ENCODE measurements at regions of chr5 and their contacts with region 1.

Region 1: GRCh38 chr5:54703133-54703532 is 185.6 kb downstream of the SNX18 start:
- DNase-seq: no peak
- ATAC-seq: no peak
- H3K4me3 ChIP-seq: no peak overlapping the region
- H3K4me3 Mint-ChIP-seq: no peak overlapping the region
- H3K27ac ChIP-seq: no peak overlapping the region
- H3K27ac Mint-ChIP-seq: no peak overlapping the region
- H3K4me1 ChIP-seq: peaks cover 10 to 23% of the 10 kb centered on the region in 2 donors
- H3K4me1 Mint-ChIP-seq: peaks cover 25% of the 10 kb centered on the region
- H3K27me3 ChIP-seq: no peaks in the 10 kb centered on the region
- H3K27me3 Mint-ChIP-seq: no peaks in the 10 kb centered on the region
- CTCF ChIP-seq: no peak

Region 2: DNA sequence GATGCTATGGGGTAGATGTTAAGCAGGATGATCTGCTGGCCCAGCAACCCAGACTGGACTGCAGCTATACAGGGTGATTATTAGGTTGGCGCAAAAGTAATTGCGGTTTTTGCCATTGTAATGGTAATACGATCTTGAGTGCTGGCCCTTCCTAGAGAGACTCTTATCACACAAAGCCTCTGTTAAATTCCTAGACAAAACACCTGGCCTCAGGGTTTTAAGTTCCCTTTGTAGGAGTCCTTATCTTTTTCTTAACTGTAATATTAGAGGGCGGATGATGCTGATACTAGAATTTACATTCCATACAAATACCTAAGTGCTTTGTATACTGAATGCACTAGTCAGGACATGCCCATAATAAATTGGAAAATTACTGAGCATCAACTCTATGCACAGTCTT is 920.5 kb before region 1 on chr5:
- CTCF ChIA-PET with region 1: no interaction called
- POLR2A ChIA-PET with region 1: no interaction called
- intact Hi-C with region 1: no loop called
- DNase-seq: no peak
- ATAC-seq: no peak
- H3K4me3 ChIP-seq: no peak overlapping the region
- H3K4me3 Mint-ChIP-seq: no peak overlapping the region
- H3K27ac ChIP-seq: no peak overlapping the region
- H3K27ac Mint-ChIP-seq: no peak overlapping the region
- H3K4me1 ChIP-seq: no peaks in the 10 kb centered on the region
- H3K4me1 Mint-ChIP-seq: no peaks in the 10 kb centered on the region
- H3K27me3 ChIP-seq: no peaks in the 10 kb centered on the region
- H3K27me3 Mint-ChIP-seq: peaks cover 8% of the 10 kb centered on the region
- CTCF ChIP-seq: no peak

Region 3: GRCh38 chr5:54743997-54744788 is 41.1 kb after region 1 on chr5:
- CTCF ChIA-PET with region 1: no interaction called
- POLR2A ChIA-PET with region 1: no interaction called
- intact Hi-C with region 1: loop called (anchors 5 kb)
- DNase-seq: peak; percentile 51
- ATAC-seq: peak; percentile 81
- H3K4me3 ChIP-seq: no peak overlapping the region
- H3K4me3 Mint-ChIP-seq: peak overlapping the region; percentile 68
- H3K27ac ChIP-seq: no peak overlapping the region
- H3K27ac Mint-ChIP-seq: peak overlapping the region; percentile 75
- H3K4me1 ChIP-seq: peaks cover 20 to 26% of the 10 kb centered on the region in 2 donors
- H3K4me1 Mint-ChIP-seq: peaks cover 42% of the 10 kb centered on the region
- H3K27me3 ChIP-seq: peaks cover 0 to 2% (median 0%) of the 10 kb centered on the region in 4 experiments
- H3K27me3 Mint-ChIP-seq: no peaks in the 10 kb centered on the region
- CTCF ChIP-seq: no peak

Region 4: DNA sequence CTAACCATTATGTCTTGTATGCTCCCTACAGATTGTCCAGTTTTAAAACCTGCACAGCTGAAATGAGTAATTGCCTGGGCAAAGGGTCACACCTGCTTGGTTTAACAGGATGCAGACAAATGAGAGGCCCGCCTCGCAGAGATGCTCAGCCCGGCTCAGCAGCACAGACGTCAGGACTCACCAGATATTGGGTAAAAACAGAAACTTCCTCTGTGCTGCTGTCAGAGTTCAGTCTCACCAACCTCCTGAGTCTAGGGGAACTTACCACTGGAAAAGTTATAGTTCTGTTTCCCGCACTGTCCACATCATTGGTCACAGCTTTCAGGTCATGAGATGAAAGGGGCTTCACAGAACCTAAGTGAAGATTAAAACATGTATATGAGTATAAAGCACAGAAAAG is 129.7 kb after region 1 on chr5:
- CTCF ChIA-PET with region 1: no interaction called
- POLR2A ChIA-PET with region 1: no interaction called
- intact Hi-C with region 1: no loop called
- DNase-seq: peak; percentile 62
- ATAC-seq: peak; percentile 85
- H3K4me3 ChIP-seq: no peak overlapping the region
- H3K4me3 Mint-ChIP-seq: peak overlapping the region; percentile 46
- H3K27ac ChIP-seq: peak overlapping the region; percentile 48 to 83
- H3K27ac Mint-ChIP-seq: peak overlapping the region; percentile 75
- H3K4me1 ChIP-seq: peaks cover 25% of the 10 kb centered on the region in 2 donors
- H3K4me1 Mint-ChIP-seq: peaks cover 38% of the 10 kb centered on the region
- H3K27me3 ChIP-seq: no peaks in the 10 kb centered on the region
- H3K27me3 Mint-ChIP-seq: no peaks in the 10 kb centered on the region
- CTCF ChIP-seq: no peak

Measured in B cell (primary cell).